ENCODE measurements at regions of chr1 and their contacts with region 1.

Region 1: GRCh38 chr1:26695356-26696118 is at the start of gene ARID1A:
- DNase-seq: peak; percentile 75

Region 2: GRCh38 chr1:26677306-26678115 is 18.0 kb before region 1 on chr1:
- CTCF ChIA-PET with region 1: interaction called, 9 read pairs
- POLR2A ChIA-PET with region 1: interaction called, 11 read pairs
- DNase-seq: peak; percentile 51

Region 3: GRCh38 chr1:26717017-26717491 is 21.5 kb after region 1 on chr1:
- CTCF ChIA-PET with region 1: interaction called, 3 read pairs
- POLR2A ChIA-PET with region 1: interaction called, 11 read pairs
- DNase-seq: no peak

Region 4: GRCh38 chr1:26728645-26729044 is 33.1 kb after region 1 on chr1:
- CTCF ChIA-PET with region 1: no interaction called
- POLR2A ChIA-PET with region 1: interaction called, 18 read pairs
- DNase-seq: no peak

Region 5: DNA sequence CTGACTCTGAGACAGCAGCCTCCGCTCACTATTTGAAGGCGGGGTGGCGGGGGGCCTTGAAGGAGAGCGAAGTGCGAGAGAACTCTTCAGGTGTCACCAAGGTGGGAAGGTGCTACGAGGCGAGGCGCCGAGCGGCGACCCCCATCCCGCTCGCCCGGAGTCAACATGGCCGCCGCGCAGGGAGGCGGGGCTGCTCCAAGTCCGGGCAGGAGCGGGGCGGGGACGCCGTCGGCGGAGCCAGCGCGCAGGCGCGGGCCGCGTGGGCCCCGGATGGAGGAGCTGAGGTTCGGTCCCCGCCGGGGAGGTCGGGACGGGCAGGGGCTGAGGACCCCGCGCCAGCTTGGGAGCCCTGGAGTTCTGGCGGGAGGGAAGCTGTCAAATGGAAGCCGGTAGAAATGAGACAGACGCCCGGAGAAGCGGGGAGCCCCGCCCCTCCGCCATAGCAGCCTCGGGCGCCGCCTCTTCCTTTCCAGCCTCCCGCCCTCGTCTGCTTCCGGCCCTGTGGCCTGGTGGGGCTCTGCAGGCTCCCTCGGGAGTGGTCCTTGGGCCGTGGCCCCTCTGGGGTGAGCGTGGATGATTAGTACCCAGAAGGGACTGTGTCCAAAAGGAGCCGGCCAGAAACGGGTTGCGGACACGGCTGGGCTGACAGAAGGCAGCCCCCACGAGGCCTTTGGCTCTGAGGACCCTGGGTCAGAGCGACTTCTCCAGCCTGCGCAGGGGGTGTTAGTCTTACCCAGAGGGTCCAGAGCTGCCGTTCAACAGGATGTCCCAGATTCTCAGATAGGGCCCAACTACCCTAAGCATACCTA is 92.4 kb after region 1 on chr1 and contains the start of gene PIGV:
- CTCF ChIA-PET with region 1: interaction called, 12 read pairs
- POLR2A ChIA-PET with region 1: interaction called, 100 read pairs
- DNase-seq: peak; percentile 94